HepG2 (cell line): ENCODE measurements at regions of chr1 and their contacts with region 1.

Region 1: DNA sequence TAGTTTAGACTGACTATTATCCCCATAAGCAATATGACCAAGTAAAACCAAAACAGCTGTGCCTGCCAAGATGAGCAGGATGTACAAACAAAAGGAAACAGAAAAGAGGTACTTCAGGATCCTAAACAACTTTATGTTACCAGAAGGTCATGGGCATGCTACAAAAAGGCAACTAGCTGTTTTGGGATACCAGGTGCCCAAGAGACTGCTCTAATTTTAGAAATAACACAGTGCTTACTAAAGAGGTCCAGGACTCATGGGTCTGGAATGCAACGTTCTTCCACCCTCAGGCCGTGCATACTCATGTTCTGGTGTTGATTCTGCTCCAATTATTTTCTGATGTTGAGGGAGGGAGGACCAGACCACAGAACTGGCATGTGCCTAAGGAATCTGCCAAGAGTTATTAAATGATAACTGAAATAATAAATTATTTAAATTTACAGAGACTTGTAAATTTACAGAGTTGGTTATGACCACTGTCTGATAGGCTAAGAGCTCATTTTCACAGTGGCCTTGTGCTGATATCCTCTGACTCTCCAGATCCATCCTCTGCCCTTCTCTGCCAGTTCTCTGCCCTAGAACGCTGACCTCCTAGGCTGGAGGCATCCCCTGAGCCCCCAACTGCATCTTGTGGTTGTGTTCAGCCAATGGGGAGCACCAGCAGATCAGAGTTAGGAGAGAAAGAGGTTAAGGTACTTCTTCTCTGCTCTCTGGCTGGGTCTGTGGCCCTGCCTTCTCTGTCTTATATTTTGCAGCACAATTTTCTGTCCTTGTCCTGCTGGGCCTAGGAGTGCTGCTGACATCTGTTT is 37.7 kb upstream of the BCL10 start:
- DNase-seq: no peak
- ATAC-seq: peak; percentile 50
- H3K4me3 ChIP-seq: no peak overlapping the region
- H3K27ac ChIP-seq: no peak overlapping the region
- H3K4me1 ChIP-seq: no peaks in the 10 kb centered on the region
- H3K27me3 ChIP-seq: no peaks in the 10 kb centered on the region
- CTCF ChIP-seq: no peak
- EP300 ChIP-seq: no peak
- POLR2A ChIP-seq: no peak
- RAD21 ChIP-seq: no peak

Region 2: GRCh38 chr1:85259118-85259911 is 54.8 kb before region 1 on chr1 and contains the start of gene C1orf52:
- CTCF ChIA-PET with region 1: no interaction called
- POLR2A ChIA-PET with region 1: no interaction called
- in situ Hi-C with region 1: no loop called
- intact Hi-C with region 1: no loop called
- DNase-seq: peak; percentile 78
- ATAC-seq: peak; percentile 97
- H3K4me3 ChIP-seq: peak within 1 kb of the TSS; percentile 93 to 100 (median 99)
- H3K27ac ChIP-seq: peak within 1 kb of the TSS; percentile 73
- H3K4me1 ChIP-seq: peaks cover 40% of the 10 kb centered on the region
- H3K27me3 ChIP-seq: no peaks in the 10 kb centered on the region; a peak in 1 of 5 replicates
- CTCF ChIP-seq: peak; percentile 92
- EP300 ChIP-seq: 0 out of 4 replicates have a peak, but pooled peaks of 1 of the 2 experiments have one; percentile 40
- POLR2A ChIP-seq: peak; percentile 87 to 91
- RAD21 ChIP-seq: peak; percentile 71
- total RNA-seq, gene C1orf52: 19.4 and 23.0 TPM in 2 replicates

Region 3: GRCh38 chr1:85692730-85693314 is 378.7 kb after region 1 on chr1:
- CTCF ChIA-PET with region 1: no interaction called
- POLR2A ChIA-PET with region 1: no interaction called
- in situ Hi-C with region 1: loop called (anchors 10 kb)
- intact Hi-C with region 1: no loop called
- DNase-seq: peak; percentile 37
- ATAC-seq: no peak
- H3K4me3 ChIP-seq: no peak overlapping the region
- H3K27ac ChIP-seq: peak overlapping the region; percentile 5
- H3K4me1 ChIP-seq: no peaks in the 10 kb centered on the region
- H3K27me3 ChIP-seq: no peaks in the 10 kb centered on the region
- CTCF ChIP-seq: peak; percentile 33; the same call in 1 of the 2 replicates
- EP300 ChIP-seq: no peak
- POLR2A ChIP-seq: no peak
- RAD21 ChIP-seq: 0 out of 2 replicates have a peak, but pooled peaks have one; percentile 15